Breast epithelium (tissue), 4 donors: ENCODE measurements at regions of chr6 and their contacts with region 1.

Region 1: DNA sequence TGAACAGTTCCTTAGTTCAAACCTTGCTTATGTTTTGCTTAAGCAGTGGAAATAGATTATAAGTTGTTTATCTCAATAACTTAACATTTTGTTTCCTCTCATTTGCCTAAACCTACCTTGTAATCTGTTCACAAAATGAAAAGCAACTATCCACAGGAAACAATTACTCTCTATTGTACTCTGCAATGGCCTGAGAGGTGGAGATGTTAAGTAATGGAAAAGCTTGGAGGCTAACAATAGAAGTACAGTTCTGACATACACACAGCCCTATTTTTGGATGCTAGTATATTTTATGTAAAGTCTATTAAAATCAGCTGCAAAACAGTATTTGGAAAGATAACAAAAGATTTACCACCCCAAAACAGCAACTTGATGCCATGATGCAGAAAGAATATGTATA is 82.1 kb downstream of the TINAG start:
- DNase-seq: no peak
- H3K4me3 ChIP-seq: no peak overlapping the region
- H3K27ac ChIP-seq: no peak overlapping the region
- H3K4me1 ChIP-seq: no peaks in the 10 kb centered on the region
- H3K27me3 ChIP-seq: no peaks in the 10 kb centered on the region
- CTCF ChIP-seq: no peak
- POLR2A ChIP-seq: no peak

Region 2: DNA sequence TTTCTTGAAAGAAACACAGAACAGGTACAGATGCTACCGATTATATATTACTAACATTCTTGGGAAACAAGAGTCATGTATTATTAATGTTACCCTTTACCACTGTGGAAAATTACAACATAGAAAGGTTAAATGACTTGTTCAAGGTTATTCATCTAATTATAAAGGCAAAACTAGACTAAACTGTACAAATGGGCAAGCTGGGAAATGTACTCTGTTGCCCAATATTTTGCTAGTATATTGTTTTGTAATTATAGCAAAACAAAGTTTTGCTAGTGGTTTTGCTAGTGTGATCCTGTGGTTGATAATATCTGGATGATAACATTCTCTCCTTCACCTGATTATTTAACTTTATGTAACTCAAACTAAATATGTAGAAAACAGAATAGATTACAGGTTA is 14.4 kb after region 1 on chr6:
- intact Hi-C with region 1: no loop called
- DNase-seq: no peak
- H3K4me3 ChIP-seq: no peak overlapping the region
- H3K27ac ChIP-seq: no peak overlapping the region
- H3K4me1 ChIP-seq: no peaks in the 10 kb centered on the region
- H3K27me3 ChIP-seq: no peaks in the 10 kb centered on the region
- CTCF ChIP-seq: no peak
- POLR2A ChIP-seq: no peak

Region 3: DNA sequence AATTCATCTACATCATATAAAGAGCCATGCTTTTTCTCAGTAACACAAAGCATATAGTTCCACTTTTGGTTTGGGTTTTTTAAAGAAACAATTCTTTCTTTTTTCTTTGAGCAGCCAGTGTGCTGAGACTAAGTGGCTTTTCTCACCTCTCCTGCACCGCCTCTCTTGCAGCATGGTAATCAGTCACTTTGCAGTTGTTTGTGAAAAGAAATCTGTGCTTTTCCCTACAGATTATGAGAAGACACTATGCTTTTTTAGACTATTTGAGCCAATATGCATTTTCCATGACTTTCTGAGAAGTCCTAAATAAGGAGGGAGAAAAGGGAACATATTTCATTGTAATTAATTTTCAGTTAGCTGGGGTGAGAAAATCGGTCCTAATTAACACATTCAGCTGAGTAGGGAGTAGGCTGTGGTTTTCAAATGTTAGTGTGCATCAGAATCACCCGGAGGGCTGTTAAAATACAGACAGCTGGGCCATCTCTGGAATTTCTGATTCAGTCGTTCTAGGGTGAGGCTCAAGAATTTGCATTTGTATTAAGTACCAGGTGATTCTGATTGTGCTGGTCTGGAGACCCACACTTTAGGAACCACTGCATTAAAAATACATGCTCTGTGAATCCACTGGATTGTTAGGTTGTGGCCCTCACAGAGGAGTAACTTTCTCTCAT is 73.1 kb after region 1 on chr6:
- intact Hi-C with region 1: no loop called
- DNase-seq: no peak
- H3K4me3 ChIP-seq: no peak overlapping the region
- H3K27ac ChIP-seq: no peak overlapping the region
- H3K4me1 ChIP-seq: no peaks in the 10 kb centered on the region
- H3K27me3 ChIP-seq: no peaks in the 10 kb centered on the region
- CTCF ChIP-seq: no peak
- POLR2A ChIP-seq: no peak

Region 4: DNA sequence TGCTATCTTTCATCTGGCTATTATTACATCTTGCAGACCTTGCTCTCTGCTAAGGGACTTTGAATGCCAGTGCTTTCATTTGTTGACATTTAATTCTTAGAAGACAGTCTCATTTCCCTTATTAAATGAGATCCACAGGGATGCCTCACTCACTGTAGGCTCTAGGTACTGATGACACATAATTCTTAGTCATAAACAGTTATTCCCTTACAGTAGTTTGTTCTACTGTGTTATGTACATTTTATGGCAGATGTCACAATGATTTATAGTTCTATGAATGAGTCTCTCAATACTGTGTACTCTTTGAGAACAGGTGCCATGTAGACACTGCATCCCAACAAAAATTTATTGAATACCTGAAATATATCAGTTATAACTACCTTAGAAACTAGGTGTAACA is 526.5 kb after region 1 on chr6:
- intact Hi-C with region 1: loop called (anchors 5 kb)
- DNase-seq: no peak
- H3K4me3 ChIP-seq: no peak overlapping the region
- H3K27ac ChIP-seq: no peak overlapping the region
- H3K4me1 ChIP-seq: no peaks in the 10 kb centered on the region
- H3K27me3 ChIP-seq: no peaks in the 10 kb centered on the region
- CTCF ChIP-seq: no peak
- POLR2A ChIP-seq: no peak